PC-9 (cell line): ENCODE measurements at regions of chr15 and their contacts with region 1.

Region 1: GRCh38 chr15:63833021-63833696 is 589 bp downstream of the HERC1 start:
- DNase-seq: peak in 1 of 2 experiments; percentile 37
- H3K4me3 ChIP-seq: peak overlapping the region; percentile 90
- H3K27ac ChIP-seq: no peak overlapping the region
- H3K4me1 ChIP-seq: peaks cover 16% of the 10 kb centered on the region
- H3K27me3 ChIP-seq: no peaks in the 10 kb centered on the region
- CTCF ChIP-seq: no peak

Region 2: GRCh38 chr15:63848499-63849214 is 15.5 kb after region 1 on chr15:
- CTCF ChIA-PET with region 1: interaction called, 4 read pairs
- POLR2A ChIA-PET with region 1: interaction called, 12 read pairs
- intact Hi-C with region 1: no loop called
- DNase-seq: no peak
- H3K4me3 ChIP-seq: no peak overlapping the region
- H3K27ac ChIP-seq: no peak overlapping the region
- H3K4me1 ChIP-seq: peaks cover 4% of the 10 kb centered on the region
- H3K27me3 ChIP-seq: no peaks in the 10 kb centered on the region
- CTCF ChIP-seq: no peak

Region 3: DNA sequence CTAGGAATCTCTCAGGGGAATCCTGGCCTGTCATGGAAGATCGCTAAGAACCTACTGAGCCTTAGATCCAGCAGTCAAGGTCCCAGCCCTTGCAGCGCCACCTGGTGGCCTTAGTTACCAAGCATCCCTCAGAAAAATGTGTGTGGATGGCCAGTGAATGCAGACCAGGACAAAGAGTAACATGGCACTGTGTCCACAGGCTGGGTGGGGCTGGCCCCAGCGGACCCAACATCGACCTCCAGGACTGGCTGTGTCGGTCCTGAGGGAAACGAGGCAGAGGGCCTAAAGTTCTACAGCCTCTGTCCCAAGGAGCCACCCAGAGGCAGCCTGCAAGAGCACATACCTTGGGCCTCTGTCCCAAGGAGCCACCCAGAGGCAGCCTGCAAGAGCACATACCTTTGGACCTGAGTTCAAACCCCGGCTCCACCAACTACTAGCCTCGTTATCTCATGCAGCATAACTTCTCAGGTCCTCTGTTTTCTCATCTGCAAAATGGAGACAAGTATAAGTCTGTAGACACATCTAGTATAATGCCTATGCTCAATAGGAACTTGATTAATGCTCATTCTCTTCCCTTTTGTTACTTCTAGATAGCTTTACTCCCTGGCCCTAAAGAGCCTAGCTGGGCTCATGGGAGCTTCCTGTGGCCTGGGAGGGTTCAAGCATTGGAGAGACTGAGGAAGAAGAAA is 58.1 kb after region 1 on chr15:
- CTCF ChIA-PET with region 1: no interaction called
- POLR2A ChIA-PET with region 1: no interaction called
- intact Hi-C with region 1: loop called (anchors 1 kb)
- DNase-seq: peak; percentile 51 to 75
- H3K4me3 ChIP-seq: no peak overlapping the region
- H3K27ac ChIP-seq: no peak overlapping the region
- H3K4me1 ChIP-seq: peaks cover 13% of the 10 kb centered on the region
- H3K27me3 ChIP-seq: no peaks in the 10 kb centered on the region
- CTCF ChIP-seq: peak; percentile 84

Region 4: GRCh38 chr15:64112904-64113303 is 279.7 kb after region 1 on chr15:
- CTCF ChIA-PET with region 1: interaction called, 10 read pairs
- POLR2A ChIA-PET with region 1: no interaction called
- intact Hi-C with region 1: no loop called
- DNase-seq: no peak
- H3K4me3 ChIP-seq: no peak overlapping the region
- H3K27ac ChIP-seq: no peak overlapping the region
- H3K4me1 ChIP-seq: no peaks in the 10 kb centered on the region
- H3K27me3 ChIP-seq: no peaks in the 10 kb centered on the region
- CTCF ChIP-seq: no peak